GM10248 (cell line): ENCODE measurements at regions of chr12 and their contacts with region 1.

Region 1: GRCh38 chr12:94289461-94290312 is 141.3 kb downstream of the PLXNC1 start:
- DNase-seq: no peak
- CTCF ChIP-seq: no peak

Region 2: GRCh38 chr12:94235848-94236247 is 53.8 kb before region 1 on chr12:
- CTCF ChIA-PET with region 1: no interaction called
- POLR2A ChIA-PET with region 1: no interaction called
- DNase-seq: no peak
- CTCF ChIP-seq: no peak

Region 3: DNA sequence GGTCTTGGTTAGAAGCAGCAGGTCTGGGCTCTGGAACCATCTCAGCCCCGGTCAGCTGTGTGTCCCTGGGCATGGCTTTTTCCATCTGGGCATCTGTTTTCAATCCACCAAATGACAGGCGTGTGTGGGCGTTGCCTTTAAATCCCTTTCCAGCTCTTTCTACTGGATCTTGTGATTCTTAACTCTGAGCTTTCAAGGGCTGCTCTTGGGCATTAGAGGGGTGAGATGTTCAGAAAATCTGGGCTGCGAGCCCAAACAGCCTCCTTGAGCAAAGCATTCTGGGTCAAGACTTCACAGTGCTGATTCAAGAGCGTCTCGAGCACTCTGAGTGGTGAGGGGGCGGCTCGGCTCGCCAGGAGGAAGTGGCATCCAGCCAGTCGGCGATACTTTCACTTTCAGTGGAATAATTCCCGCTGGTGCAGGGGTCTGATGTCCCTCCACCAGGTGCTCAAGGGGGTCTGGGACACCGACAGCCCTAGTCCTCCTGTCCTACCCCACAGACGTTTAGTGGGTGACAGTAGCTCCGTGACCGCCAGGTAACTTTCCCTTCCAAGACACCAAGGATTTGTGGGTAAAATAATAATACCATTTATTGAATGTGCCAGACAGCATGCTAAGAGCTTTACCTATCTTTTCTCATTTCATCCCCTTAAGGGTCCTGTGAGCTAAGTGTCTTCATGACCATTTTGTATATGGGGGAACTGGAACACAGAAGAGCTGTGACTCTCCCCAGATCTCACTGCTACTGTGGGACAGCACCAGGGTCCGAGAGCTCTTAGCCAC is 27.3 kb before region 1 on chr12:
- CTCF ChIA-PET with region 1: interaction called, 10 read pairs
- POLR2A ChIA-PET with region 1: no interaction called
- DNase-seq: peak; percentile 76
- CTCF ChIP-seq: no peak

Region 4: DNA sequence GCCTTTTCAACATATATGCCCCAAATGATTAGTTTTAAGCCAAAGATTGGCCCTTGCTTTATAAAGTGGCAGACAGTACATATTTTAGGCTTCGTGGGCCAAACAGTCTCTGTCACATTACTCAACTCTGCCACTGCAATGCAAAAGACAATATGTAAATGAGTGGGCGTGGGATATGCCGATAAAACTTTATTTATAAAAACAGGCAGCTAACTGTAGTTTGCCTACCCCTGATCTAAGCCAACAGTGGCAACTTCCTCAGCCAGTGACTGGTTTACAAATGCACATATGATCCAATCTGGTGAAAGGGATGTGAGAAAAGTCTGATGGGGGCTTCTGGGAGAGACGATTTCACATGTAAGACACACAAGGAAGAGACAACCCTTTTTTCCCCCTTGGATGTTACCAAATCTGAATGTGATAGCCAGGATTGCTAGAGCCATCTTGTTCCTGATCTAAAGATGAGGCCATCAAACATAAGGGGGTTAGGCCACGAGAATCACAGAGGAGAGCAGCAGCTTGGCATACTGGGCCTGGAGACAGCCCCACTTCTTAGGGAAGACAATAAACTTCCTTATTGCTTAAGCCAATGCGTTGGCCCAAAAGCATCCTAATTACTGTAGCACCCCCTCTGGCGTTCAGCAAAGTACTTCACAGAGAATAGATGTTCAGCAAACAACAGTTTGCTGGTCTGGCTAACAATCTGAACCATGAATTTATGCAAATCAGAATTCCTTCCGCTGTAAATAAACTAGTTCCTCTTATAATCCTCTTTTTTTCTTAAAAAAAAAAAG is 435.9 kb after region 1 on chr12:
- CTCF ChIA-PET with region 1: no interaction called
- POLR2A ChIA-PET with region 1: no interaction called
- DNase-seq: no peak
- CTCF ChIP-seq: peak; percentile 36